ENCODE measurements at regions of chr3 and their contacts with region 1.

Region 1: DNA sequence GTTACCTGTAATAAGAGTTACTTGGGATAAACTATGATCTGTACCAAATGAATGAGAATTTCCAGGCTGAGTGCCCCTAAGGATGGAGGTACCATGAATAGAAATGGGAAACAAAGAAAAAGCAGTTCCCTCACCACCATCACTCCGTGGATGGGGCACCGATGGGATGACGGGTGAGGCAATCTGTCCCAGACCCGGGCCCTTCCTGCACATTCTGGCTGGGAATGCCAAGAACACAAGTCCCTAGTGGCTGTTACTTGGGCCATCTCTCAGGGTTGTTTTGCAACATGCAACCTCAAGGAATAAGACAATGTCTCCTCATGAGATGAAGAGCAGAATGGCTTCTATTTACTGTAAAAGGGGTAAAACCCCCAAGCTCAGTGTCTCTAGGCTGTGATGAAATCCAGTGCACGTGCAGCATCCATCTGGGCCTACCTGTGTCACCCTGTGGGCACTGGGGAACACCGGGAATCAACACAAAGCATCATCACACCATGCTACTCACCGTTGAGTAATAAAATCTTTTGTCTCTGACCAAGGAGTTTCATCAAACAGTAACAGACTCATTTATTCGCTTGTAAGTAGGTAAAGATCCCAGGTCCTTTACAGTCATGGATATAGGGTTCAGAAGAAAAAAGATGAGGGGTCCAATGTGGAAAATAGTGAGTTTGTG is 22.3 kb downstream of the GNB4 start:
- DNase-seq: no peak
- ATAC-seq: no peak

Region 2: DNA sequence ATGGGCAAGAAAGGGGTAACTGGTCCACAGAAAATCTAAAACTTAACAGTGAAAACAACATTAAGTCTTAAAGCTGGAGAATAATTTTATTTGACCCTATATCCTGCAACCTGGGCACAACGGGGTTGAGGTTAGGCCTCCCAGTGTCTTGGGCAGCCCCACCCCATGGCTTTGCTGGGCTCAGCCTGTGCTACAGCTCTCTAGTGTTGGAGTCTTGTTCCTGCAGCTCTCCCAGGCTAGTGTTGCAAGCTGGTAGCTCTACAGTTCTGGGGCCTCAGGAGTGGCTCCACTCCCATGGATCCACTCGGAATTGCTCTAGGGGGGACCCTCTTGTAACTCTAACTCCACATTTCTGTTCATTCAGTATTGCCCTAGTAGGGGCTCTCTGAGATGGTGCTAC is 47.2 kb after region 1 on chr3:
- intact Hi-C with region 1: loop called (anchors 5 kb)
- DNase-seq: no peak
- ATAC-seq: peak; percentile 23